ENCODE measurements at regions of chr10 and their contacts with region 1.

Region 1: GRCh38 chr10:15370856-15371701 is at the start of gene FAM171A1:
- DNase-seq: peak; percentile 30 to 51
- H3K4me3 ChIP-seq: peak within 1 kb of the TSS; percentile 41 to 82
- H3K27ac ChIP-seq: peak within 1 kb of the TSS; percentile 64 to 72
- H3K4me1 ChIP-seq: no peaks in the 10 kb centered on the region
- H3K27me3 ChIP-seq: no peaks in the 10 kb centered on the region
- CTCF ChIP-seq: peak in 3 of 4 experiments; percentile 31 to 57 (median 54)
- POLR2A ChIP-seq: no peak
- total RNA-seq, gene FAM171A1: 7.4 to 40.4 (median 21.6) TPM

Region 2: DNA sequence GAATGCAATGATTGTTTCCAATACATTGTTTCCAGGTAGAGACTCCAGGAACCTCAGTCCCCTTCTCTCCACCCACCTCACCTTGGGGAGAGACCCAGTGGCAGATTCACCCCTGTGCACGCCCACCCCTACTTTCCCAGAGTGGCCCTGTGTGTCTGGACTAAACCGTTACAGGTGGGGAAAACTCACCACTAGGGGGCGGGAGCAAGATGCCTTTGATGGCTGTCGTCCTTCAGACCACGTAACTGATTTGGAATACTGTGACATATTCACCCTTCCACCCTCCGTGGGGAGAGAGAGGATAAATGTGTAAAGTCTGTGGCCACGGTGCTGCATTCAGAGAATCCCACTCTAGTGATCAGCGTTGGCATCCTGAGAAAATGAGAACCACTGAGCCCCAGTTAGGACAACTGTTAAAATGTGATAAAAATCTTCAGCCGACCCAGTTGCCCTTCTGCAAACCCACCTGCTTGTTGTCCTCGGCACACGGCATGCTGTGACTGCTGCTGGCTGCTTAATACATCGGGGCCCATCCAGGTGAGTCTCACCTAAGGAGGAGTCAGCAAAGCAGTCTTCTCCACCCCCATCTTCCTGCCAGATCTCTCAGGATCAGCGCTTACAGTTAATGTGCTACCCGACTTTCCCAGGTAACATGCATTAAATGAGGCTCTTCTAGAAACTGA is 161.1 kb before region 1 on chr10:
- intact Hi-C with region 1: loop called (anchors 5 kb)
- DNase-seq: peak; percentile 73 to 86
- H3K4me3 ChIP-seq: no peak overlapping the region
- H3K27ac ChIP-seq: no peak overlapping the region
- H3K4me1 ChIP-seq: no peaks in the 10 kb centered on the region
- H3K27me3 ChIP-seq: no peaks in the 10 kb centered on the region
- CTCF ChIP-seq: peak; percentile 62 to 81 (median 76)
- POLR2A ChIP-seq: no peak

Region 3: GRCh38 chr10:15325243-15325943 is 45.7 kb before region 1 on chr10:
- intact Hi-C with region 1: no loop called
- DNase-seq: peak; percentile 20 to 33
- H3K4me3 ChIP-seq: no peak overlapping the region
- H3K27ac ChIP-seq: peak overlapping the region; percentile 39 to 66
- H3K4me1 ChIP-seq: peaks cover 3 to 8% of the 10 kb centered on the region in 2 donors
- H3K27me3 ChIP-seq: no peaks in the 10 kb centered on the region
- CTCF ChIP-seq: no peak
- POLR2A ChIP-seq: no peak

Region 4: DNA sequence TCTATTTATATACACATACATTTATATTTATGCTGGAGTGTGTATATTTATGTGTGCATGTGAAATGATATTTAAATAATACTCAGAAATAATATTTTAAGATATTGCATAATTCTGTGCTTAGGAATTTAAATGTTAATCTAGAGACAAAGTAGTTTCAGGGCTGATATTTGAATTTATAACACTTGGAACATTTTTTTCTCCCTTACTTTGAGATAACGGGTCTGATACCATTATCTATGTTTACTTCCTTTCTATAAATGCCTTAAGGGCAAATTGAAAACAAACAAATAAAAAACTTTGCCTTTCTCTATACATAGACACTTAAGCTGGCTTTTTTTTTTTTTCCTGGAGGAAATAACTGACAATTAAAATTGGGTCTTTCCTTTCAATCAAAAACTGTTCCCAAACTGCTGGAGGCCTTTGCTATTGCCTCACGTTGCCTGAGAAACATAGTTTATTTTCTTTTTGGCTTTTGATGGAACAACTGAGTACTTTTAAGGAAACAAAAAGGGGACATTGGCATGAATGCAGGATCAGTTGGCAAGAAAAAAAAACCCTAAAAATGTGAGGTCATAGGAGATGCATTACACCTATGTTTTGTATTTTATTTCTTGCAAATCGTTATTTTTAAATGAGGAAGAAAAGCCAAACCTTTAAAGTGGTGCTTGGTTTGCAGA is 249.9 kb after region 1 on chr10:
- intact Hi-C with region 1: no loop called
- DNase-seq: no peak
- H3K4me3 ChIP-seq: no peak overlapping the region
- H3K27ac ChIP-seq: peak overlapping the region in 1 of 2 donors; percentile 18
- H3K4me1 ChIP-seq: peaks cover 0 to 5% of the 10 kb centered on the region in 2 donors
- H3K27me3 ChIP-seq: no peaks in the 10 kb centered on the region
- CTCF ChIP-seq: no peak
- POLR2A ChIP-seq: no peak

Region 5: DNA sequence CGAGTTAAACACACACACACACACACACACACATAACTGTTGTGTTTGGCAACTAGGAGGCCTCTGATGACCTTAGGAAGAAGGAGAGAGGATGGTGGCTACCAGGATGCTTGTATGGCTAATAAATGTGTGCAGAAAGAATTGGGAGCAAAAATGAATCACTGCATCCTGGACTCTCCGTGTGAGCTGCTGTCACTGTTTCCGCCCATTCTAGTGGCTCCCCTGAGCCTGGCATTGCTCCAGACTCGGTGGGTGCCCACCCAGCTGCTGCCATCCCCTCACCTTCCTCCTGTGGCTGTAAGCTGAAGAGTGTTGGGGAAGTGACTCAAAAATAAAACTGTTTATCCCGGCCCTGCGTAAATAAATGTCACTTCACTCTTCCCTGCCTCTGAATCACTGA is 638.7 kb after region 1 on chr10:
- intact Hi-C with region 1: no loop called
- DNase-seq: no peak
- H3K4me3 ChIP-seq: no peak overlapping the region
- H3K27ac ChIP-seq: no peak overlapping the region
- H3K4me1 ChIP-seq: no peaks in the 10 kb centered on the region
- H3K27me3 ChIP-seq: no peaks in the 10 kb centered on the region
- CTCF ChIP-seq: no peak
- POLR2A ChIP-seq: no peak